WTC11 (cell line): ENCODE measurements at regions of chr6 and their contacts with region 1.

Region 1: DNA sequence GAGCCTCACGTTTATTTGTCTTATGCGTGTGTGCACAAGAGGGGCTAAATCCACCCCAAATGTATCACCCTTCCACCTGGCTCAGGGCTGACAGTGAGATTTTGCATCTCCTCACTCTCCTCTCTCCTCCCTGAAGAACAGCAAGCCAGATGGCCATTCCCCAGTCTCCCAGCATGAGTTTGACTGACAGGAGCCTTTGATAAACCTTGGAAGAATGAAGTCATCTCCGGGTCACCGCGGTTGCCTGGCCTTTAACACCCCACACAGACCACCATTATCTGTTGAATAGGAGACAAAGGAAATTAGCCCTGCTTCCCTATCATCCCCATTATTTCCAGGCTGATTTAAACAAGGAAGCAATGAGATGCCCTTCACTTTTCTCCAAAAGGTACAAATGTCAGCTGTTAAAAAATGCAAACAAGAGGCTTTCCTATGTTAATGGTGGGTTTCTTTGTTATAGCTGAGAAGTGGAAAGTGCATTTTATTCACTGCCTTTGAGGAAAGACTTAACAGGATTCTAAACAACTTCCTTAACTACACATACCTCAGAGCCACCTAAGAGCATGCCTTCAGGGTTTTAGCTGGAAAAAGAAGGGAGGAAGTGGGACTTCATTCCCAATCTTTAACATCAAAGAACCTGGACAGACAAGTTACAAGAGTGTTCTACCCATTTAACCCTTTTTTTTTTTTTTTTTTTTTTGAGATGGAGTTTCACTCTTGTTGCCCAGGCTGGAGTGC is 524.8 kb upstream of the ID4 start:
- DNase-seq: peak; percentile 43
- ATAC-seq: peak; percentile 85
- H3K4me3 Mint-ChIP-seq: peak overlapping the region; percentile 54
- H3K27ac Mint-ChIP-seq: peak overlapping the region; percentile 97
- H3K4me1 Mint-ChIP-seq: peaks cover 41% of the 10 kb centered on the region
- H3K27me3 Mint-ChIP-seq: peaks cover 60% of the 10 kb centered on the region
- CTCF ChIP-seq: no peak

Region 2: GRCh38 chr6:18260448-18261106 is 1051.8 kb before region 1 on chr6:
- CTCF ChIA-PET with region 1: no interaction called
- POLR2A ChIA-PET with region 1: interaction called, 11 read pairs
- DNase-seq: no peak
- ATAC-seq: 0 out of 2 replicates have a peak, but pooled peaks have one; percentile 3
- H3K4me3 Mint-ChIP-seq: peak overlapping the region; percentile 94
- H3K27ac Mint-ChIP-seq: peak overlapping the region; percentile 83
- H3K4me1 Mint-ChIP-seq: peaks cover 47% of the 10 kb centered on the region
- H3K27me3 Mint-ChIP-seq: no peaks in the 10 kb centered on the region
- CTCF ChIP-seq: no peak

Region 3: DNA sequence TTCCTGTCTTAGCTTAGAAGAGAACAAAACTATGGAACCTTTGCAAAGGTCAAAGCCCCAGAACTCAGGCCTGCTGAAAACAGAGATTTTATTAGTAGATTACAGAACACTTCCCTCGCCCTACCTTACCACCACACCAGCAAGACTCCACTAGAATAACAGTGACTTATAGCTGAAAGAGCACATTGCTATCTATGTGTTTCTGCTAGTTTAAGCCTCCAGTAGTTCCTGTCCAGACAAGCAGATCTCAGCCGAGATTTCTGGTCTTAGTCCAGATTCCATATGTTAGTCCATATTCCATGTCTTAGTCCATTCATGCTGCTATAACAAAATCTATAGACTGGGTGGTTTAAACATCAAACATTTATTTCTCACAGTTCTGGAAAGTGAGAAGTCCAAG is 112.4 kb after region 1 on chr6:
- CTCF ChIA-PET with region 1: no interaction called
- POLR2A ChIA-PET with region 1: no interaction called
- DNase-seq: no peak
- ATAC-seq: no peak; the same call in 1 of the 2 replicates
- H3K4me3 Mint-ChIP-seq: no peak overlapping the region
- H3K27ac Mint-ChIP-seq: no peak overlapping the region; the same call in 1 of the 2 replicates
- H3K4me1 Mint-ChIP-seq: peaks cover 9% of the 10 kb centered on the region
- H3K27me3 Mint-ChIP-seq: no peaks in the 10 kb centered on the region
- CTCF ChIP-seq: no peak

Region 4: DNA sequence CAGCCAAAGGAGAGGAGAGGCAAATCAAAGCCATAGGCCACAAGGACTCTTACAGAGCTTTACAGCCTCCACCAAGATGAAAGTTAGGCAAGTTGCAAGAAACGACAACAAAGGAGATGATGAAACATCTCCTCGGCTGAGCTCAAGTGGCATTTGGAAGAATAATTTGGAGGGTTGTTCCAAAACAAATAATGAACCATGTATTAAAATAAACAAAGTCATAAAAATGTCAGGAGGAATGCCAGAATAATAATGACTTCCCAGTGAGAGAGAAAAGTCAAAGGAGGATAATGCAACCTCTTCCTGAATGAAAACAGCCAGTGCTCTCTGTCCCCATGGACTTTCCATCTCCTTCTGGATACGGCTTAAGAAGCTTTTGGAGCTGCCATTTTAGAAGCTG is 153.3 kb after region 1 on chr6:
- CTCF ChIA-PET with region 1: no interaction called
- POLR2A ChIA-PET with region 1: no interaction called
- DNase-seq: no peak
- ATAC-seq: no peak
- H3K4me3 Mint-ChIP-seq: no peak overlapping the region
- H3K27ac Mint-ChIP-seq: no peak overlapping the region; the same call in 1 of the 2 replicates
- H3K4me1 Mint-ChIP-seq: no peaks in the 10 kb centered on the region
- H3K27me3 Mint-ChIP-seq: no peaks in the 10 kb centered on the region
- CTCF ChIP-seq: no peak